Right ventricle myocardium superior (tissue), 1 donor: ENCODE measurements at regions of chr9 and their contacts with region 1.

Region 1: DNA sequence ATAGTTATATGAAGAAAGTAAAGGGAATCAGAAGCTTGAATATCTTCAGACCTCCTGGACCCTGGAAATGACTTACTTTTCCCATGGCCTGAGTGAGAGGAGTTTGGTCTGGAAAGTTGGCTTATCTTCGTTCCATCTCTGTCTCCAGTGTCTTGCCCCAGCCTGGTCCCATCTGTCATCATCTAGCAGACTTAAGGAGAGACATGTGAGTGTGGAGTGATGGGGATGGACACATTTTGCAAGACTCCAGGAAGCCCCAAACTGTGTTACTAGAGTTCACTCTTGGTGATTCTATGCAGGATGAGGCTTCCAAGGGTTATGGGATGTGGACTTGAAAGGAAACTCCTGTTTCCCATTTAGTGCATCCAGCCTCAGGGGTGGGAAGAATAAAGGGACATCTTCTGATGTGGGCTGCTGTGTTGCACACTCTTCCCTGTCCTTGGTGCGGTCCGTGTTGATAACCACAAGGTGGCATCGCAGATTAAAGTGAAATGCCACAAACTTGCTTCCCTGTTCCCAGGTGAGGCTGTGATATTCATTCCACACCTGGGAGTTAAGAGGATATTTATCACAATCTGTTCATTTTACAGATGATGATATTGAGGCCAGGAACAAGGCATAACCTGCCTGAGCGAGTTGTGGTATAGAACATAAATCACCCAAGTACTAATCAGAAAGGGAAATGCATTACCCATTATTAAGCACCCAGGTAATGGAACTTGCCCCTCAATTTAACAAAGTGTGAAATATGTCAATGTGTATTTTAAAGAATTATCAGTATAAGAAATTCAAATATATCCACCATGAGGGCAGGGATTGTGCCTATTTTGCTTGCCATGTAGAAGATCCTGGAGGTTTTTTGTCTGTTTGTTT is 269.9 kb upstream of the PAPPA start:
- DNase-seq: no peak
- ATAC-seq: peak; percentile 91

Region 2: DNA sequence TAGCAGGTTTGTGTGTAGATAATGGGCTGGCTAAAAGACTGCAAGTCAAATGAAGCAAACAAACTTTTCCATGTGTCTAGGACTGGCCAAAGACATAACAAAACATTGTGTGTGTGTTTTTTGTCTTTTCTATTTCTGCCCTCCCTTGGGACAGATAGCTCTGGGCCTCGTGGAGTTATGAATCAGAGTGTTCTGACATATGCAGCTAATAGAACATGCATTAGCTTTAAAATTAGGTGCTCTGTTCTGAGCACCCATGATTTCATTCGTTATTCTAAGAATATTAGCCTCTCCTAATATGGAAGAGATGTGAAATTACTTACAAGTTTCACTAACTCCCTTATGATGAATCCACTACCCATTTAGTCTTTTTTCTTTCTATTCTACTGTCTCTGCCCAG is 97.4 kb before region 1 on chr9:
- intact Hi-C with region 1: no loop called
- DNase-seq: no peak
- ATAC-seq: no peak

Region 3: GRCh38 chr9:116112236-116112635 is 228.5 kb after region 1 on chr9:
- intact Hi-C with region 1: loop called (anchors 5 kb)
- DNase-seq: no peak
- ATAC-seq: no peak